T-cell (primary cell): ENCODE measurements at regions of chr17 and their contacts with region 1.

Region 1: GRCh38 chr17:18038861-18039534 is at the starts of genes ATPAF2 and GID4:
- DNase-seq: peak; percentile 97 to 100 (median 99)
- ATAC-seq: peak; percentile 91 to 95 (median 92)
- H3K4me3 ChIP-seq: peak within 1 kb of the TSS; percentile 67 to 91
- H3K4me3 Mint-ChIP-seq: peak within 1 kb of the TSS; percentile 91 to 98 (median 92)
- H3K27ac ChIP-seq: peak within 1 kb of the TSS; percentile 35
- H3K27ac Mint-ChIP-seq: peak within 1 kb of the TSS; percentile 85 to 95
- H3K4me1 ChIP-seq: peaks cover 13 to 36% of the 10 kb centered on the region in 2 experiments
- H3K4me1 Mint-ChIP-seq: peaks cover 46 to 57% (median 57%) of the 10 kb centered on the region in 3 donors
- H3K27me3 ChIP-seq: no peaks in the 10 kb centered on the region
- H3K27me3 Mint-ChIP-seq: no peaks in the 10 kb centered on the region
- total RNA-seq, gene ATPAF2: 23.6 to 32.9 (median 27.7) TPM
- total RNA-seq, gene GID4: 7.9 to 12.3 (median 10.0) TPM

Region 2: GRCh38 chr17:17328251-17328650 is 710.7 kb before region 1 on chr17:
- CTCF ChIA-PET with region 1: no interaction called
- POLR2A ChIA-PET with region 1: no interaction called
- DNase-seq: no peak
- ATAC-seq: no peak
- H3K4me3 ChIP-seq: no peak overlapping the region
- H3K4me3 Mint-ChIP-seq: no peak overlapping the region
- H3K27ac ChIP-seq: no peak overlapping the region
- H3K27ac Mint-ChIP-seq: no peak overlapping the region
- H3K4me1 ChIP-seq: no peaks in the 10 kb centered on the region
- H3K4me1 Mint-ChIP-seq: no peaks in the 10 kb centered on the region
- H3K27me3 ChIP-seq: no peaks in the 10 kb centered on the region
- H3K27me3 Mint-ChIP-seq: no peaks in the 10 kb centered on the region

Region 3: DNA sequence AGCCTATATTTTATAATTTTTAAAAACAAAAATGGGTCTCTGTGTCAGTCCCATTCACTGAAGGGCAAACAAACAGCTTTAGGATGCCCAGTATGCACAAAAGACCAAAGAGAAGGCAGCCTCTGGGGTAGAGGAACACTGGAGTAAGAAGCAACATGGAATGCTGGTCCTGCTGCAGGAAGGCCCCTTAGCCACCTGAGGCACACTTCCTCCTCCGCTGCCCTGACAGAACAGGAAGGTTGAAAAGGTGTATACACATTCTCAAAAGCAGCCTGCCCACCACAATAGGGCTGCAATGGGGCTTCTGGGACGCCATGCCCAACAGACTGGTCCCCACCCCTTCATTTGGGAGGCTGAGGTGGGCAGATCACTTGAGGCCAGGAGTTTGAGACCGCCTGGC is 86.3 kb before region 1 on chr17:
- CTCF ChIA-PET with region 1: no interaction called
- POLR2A ChIA-PET with region 1: interaction called in 1 of 2 experiments, 10 read pairs
- DNase-seq: no peak
- ATAC-seq: no peak
- H3K4me3 ChIP-seq: no peak overlapping the region
- H3K4me3 Mint-ChIP-seq: no peak overlapping the region
- H3K27ac ChIP-seq: no peak overlapping the region
- H3K27ac Mint-ChIP-seq: no peak overlapping the region
- H3K4me1 ChIP-seq: peaks cover 7 to 30% of the 10 kb centered on the region in 2 experiments
- H3K4me1 Mint-ChIP-seq: peaks cover 51 to 69% (median 57%) of the 10 kb centered on the region in 3 donors
- H3K27me3 ChIP-seq: no peaks in the 10 kb centered on the region
- H3K27me3 Mint-ChIP-seq: no peaks in the 10 kb centered on the region